Activated T-helper 2 cell treated with anti-CD3 and anti-CD28 coated beads, Interferon-gamma antibody, Interleukin-2, Interleukin-4, amounts not matched to agents 10 μg/mL and 5 μg/mL and 100 μg/mL, durations not matched to agents 14 hours and 24 hours and 36 hours (primary cell): ENCODE measurements at regions of chr9 and their contacts with region 1.

Region 1: GRCh38 chr9:104093647-104094533 is at the start of gene SMC2:
- DNase-seq: peak; percentile 91
- H3K4me3 Mint-ChIP-seq: peak within 1 kb of the TSS; percentile 95
- H3K27ac Mint-ChIP-seq: peak within 1 kb of the TSS; percentile 99
- H3K4me1 Mint-ChIP-seq: peaks cover 44% of the 10 kb centered on the region
- H3K27me3 Mint-ChIP-seq: no peaks in the 10 kb centered on the region
- total RNA-seq, gene SMC2: 56.1 and 57.5 TPM in 2 replicates

Region 2: DNA sequence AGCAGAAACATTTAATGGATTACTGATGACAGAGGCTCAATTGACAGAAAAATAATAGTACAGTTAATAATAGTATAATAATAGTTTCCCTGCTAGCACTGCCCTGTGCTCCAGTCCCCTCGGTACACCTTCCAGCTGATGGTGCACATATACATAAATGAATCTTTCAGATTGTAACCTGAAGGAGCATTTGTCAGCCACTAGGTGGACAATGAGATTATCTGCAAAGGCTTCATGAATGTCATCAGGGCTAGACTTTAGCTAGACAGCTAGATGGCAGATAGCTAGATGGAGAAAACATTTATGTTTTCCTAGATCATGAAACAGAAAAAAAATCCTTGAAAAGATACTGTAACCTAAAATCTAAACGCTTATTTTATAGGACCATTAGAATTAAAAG is 304.2 kb before region 1 on chr9:
- intact Hi-C with region 1: loop called (anchors 10 kb)
- DNase-seq: no peak
- H3K4me3 Mint-ChIP-seq: no peak overlapping the region
- H3K27ac Mint-ChIP-seq: no peak overlapping the region
- H3K4me1 Mint-ChIP-seq: no peaks in the 10 kb centered on the region
- H3K27me3 Mint-ChIP-seq: peaks cover 2% of the 10 kb centered on the region

Region 3: GRCh38 chr9:104142799-104143549 is 49.1 kb after region 1 on chr9:
- intact Hi-C with region 1: loop called (anchors 2 kb)
- DNase-seq: no peak
- H3K4me3 Mint-ChIP-seq: no peak overlapping the region
- H3K27ac Mint-ChIP-seq: peak overlapping the region; percentile 62
- H3K4me1 Mint-ChIP-seq: peaks cover 29% of the 10 kb centered on the region
- H3K27me3 Mint-ChIP-seq: no peaks in the 10 kb centered on the region

Region 4: DNA sequence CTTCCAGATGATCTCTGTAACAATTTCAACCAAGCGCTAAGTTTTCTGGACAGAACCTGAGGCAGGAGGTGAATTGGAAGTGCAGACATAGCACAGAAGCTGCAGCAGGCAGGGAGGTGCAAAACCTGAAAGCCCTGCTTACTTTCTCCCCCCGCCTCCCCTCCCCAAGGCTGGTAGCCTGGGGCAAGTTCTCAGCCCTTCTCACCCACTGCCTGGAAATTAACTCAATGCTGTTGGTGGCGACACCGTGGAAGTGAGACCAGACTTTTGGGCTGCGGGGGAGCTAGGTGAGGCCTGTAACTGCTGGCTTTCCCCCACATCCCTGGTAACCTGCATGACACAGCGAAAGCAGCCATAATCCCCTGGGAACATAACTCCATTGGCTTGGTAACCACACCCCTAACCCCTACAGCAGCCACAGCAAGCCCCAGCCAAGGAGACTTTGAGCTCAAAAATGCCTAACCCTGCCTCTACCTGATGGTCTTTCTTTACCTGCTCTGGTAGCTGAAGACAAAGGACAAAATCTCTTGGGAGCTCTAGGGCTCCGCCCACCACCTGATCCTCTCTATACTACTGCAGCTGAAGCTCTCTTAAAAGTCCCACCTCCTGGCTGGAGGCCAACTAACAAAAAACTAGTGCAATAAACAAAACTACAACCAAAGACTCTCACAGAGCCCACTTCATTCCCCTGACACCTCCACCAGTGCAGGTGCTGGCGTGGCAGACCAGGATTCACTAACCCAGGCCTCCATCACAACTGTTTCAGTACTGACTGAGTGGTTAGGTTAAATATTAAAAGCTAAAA is 463.1 kb after region 1 on chr9:
- intact Hi-C with region 1: no loop called
- DNase-seq: no peak
- H3K4me3 Mint-ChIP-seq: no peak overlapping the region
- H3K27ac Mint-ChIP-seq: no peak overlapping the region
- H3K4me1 Mint-ChIP-seq: no peaks in the 10 kb centered on the region
- H3K27me3 Mint-ChIP-seq: no peaks in the 10 kb centered on the region